ENCODE measurements at regions of chr1 and their contacts with region 1.

Region 1: DNA sequence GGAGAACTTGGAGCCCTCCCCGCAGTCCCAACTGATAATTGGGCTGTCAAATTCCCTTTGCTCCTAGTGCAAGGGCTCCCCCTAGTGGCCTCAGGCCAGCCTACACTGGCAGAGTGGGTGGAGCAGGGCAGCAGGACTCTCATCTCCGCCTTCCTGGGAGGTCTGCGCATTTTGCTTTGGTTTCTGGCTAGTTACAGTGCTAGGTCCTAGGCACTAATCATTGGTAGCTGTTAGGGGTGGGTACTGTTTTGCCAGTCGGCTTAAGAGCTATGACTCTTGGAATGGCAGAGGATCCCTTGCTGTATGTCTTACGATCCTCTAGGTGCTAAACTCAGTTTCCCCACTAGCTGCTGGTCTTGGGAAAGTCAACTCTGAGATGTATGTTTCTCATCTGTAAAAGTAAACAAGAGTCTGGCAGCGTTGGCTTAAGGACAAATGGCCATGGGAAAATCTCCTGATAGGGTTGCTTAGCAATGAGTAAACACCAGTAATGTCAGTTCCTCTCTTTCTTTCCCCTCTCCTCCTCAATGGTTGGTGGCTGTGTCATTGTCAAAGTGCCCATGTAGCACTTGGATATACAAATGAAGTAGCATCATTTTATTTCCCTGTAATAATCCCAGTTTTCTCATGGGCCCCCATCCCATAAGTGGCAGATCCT is 2.1 kb upstream of the FYB2 start:
- DNase-seq: no peak
- ATAC-seq: peak; percentile 82
- H3K4me3 ChIP-seq: no peak overlapping the region
- H3K27ac ChIP-seq: no peak overlapping the region
- H3K4me1 ChIP-seq: no peaks in the 10 kb centered on the region
- H3K27me3 ChIP-seq: peaks cover 0 to 1% of the 10 kb centered on the region in 2 experiments; a peak in 2 of 4 replicates
- CTCF ChIP-seq: peak; percentile 68 to 95 (median 95)
- EP300 ChIP-seq: no peak
- POLR2A ChIP-seq: no peak
- RAD21 ChIP-seq: peak; percentile 76

Region 2: DNA sequence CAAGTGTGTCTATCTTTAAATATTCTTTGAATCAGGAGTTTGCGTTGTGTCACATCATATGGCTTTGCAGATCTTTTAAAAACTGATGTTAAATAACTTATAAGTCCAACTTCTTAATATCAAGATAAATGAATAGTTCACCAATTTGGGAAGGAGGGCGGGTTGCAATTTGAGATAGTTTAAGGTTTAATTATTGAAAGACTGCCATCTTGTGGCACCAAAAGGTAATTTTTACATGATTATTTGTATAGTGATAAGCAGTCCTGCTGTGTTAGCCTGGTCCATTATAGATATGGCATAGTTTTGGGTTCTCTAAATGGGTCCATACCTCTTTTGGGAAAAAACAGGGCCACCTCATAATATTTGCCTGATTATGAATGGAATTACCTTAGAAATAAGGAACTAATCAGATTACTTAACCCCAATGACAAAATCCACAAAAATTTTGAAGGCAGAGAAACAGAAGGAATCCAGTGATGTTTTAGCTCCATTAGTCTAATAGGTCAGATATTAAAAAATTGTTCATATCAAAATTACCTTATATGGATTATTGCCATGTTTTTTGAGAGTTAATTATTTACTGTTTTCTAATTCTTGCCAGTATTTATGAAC is 111.9 kb before region 1 on chr1:
- CTCF ChIA-PET with region 1: interaction called, 18 read pairs
- POLR2A ChIA-PET with region 1: no interaction called
- RAD21 ChIA-PET with region 1: interaction called, 5 read pairs
- SMC1A ChIA-PET with region 1: interaction called, 3 read pairs
- in situ Hi-C with region 1: no loop called
- intact Hi-C with region 1: loop called (anchors 5 kb)
- DNase-seq: no peak
- ATAC-seq: peak; percentile 85
- H3K4me3 ChIP-seq: no peak overlapping the region
- H3K27ac ChIP-seq: no peak overlapping the region
- H3K4me1 ChIP-seq: no peaks in the 10 kb centered on the region
- H3K27me3 ChIP-seq: no peaks in the 10 kb centered on the region
- CTCF ChIP-seq: peak; percentile 33 to 57 (median 44); a peak in 4 of 6 replicates
- EP300 ChIP-seq: no peak
- POLR2A ChIP-seq: no peak
- RAD21 ChIP-seq: peak; percentile 45

Region 3: DNA sequence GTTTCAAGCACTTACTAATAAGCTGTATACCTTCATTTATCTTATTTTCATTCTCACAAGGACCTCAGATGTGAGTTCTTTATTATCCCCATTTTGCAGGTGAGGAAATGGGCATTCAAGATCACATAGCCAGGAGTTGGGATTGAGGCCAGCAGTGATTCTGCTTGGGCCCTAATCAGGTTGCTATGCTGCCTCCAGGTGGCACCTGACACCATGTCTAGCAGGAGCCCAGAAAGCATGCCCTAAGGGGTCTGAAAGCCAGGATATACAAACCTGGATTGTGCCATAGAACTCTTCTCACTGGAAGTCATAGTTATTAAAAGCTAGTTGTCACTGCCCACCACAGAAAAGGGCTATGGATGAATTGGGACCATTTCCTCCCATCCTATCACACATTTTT is 63.1 kb before region 1 on chr1:
- CTCF ChIA-PET with region 1: interaction called, 10 read pairs
- POLR2A ChIA-PET with region 1: no interaction called
- RAD21 ChIA-PET with region 1: interaction called, 3 read pairs
- SMC1A ChIA-PET with region 1: interaction called, 3 read pairs
- in situ Hi-C with region 1: no loop called
- intact Hi-C with region 1: loop called (anchors 2 kb)
- DNase-seq: no peak
- ATAC-seq: peak; percentile 78
- H3K4me3 ChIP-seq: no peak overlapping the region
- H3K27ac ChIP-seq: no peak overlapping the region
- H3K4me1 ChIP-seq: no peaks in the 10 kb centered on the region
- H3K27me3 ChIP-seq: no peaks in the 10 kb centered on the region
- CTCF ChIP-seq: peak in 2 of 3 experiments; percentile 14 to 34; a peak in 3 of 6 replicates
- EP300 ChIP-seq: no peak
- POLR2A ChIP-seq: no peak
- RAD21 ChIP-seq: 0 out of 2 replicates have a peak, but pooled peaks have one; percentile 17

Region 4: DNA sequence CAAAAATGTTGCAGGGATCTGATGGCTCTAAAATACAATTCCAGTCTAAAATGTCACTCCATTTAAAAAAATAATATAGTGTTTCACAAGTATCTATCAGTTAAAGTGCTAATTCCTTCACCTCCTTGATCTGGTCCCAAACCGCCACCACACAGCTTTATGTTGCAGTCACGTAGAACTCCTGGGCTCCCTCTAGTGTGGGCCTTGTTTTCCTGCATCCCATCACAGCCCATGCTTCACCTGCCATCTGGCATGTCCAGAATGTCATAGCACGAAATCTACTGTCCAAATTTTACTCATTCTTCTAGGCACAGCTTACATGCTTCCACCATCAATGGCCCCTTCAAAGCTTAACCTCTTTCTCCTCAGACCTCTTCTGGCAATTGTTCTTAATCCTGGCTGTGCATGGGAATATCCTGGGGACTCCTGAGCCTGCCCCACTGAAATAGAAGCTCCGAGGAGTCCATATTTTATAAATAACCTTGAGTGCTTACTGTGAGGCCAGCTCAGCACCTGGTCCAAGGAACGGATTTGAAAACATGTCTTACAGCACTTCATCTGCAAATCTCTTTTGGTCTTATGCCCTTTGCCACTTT is 17.6 kb before region 1 on chr1:
- CTCF ChIA-PET with region 1: interaction called, 15 read pairs
- POLR2A ChIA-PET with region 1: no interaction called
- RAD21 ChIA-PET with region 1: interaction called, 4 read pairs
- SMC1A ChIA-PET with region 1: interaction called, 6 read pairs
- in situ Hi-C with region 1: no loop called
- intact Hi-C with region 1: no loop called
- DNase-seq: no peak
- ATAC-seq: peak; percentile 94
- H3K4me3 ChIP-seq: no peak overlapping the region
- H3K27ac ChIP-seq: no peak overlapping the region
- H3K4me1 ChIP-seq: no peaks in the 10 kb centered on the region
- H3K27me3 ChIP-seq: no peaks in the 10 kb centered on the region
- CTCF ChIP-seq: peak; percentile 63 to 74 (median 73)
- EP300 ChIP-seq: no peak
- POLR2A ChIP-seq: no peak
- RAD21 ChIP-seq: peak; percentile 30

Region 5: GRCh38 chr1:56948403-56949023 is 127.2 kb after region 1 on chr1:
- CTCF ChIA-PET with region 1: no interaction called
- POLR2A ChIA-PET with region 1: no interaction called
- RAD21 ChIA-PET with region 1: no interaction called
- SMC1A ChIA-PET with region 1: no interaction called
- in situ Hi-C with region 1: no loop called
- intact Hi-C with region 1: no loop called
- DNase-seq: no peak
- ATAC-seq: 0 out of 3 replicates have a peak, but pooled peaks have one; percentile 26
- H3K4me3 ChIP-seq: no peak overlapping the region
- H3K27ac ChIP-seq: no peak overlapping the region
- H3K4me1 ChIP-seq: no peaks in the 10 kb centered on the region
- H3K27me3 ChIP-seq: no peaks in the 10 kb centered on the region; a peak in 1 of 4 replicates
- CTCF ChIP-seq: no peak
- EP300 ChIP-seq: no peak
- POLR2A ChIP-seq: no peak
- RAD21 ChIP-seq: no peak

Region 6: GRCh38 chr1:58047265-58047858 is 1226.1 kb after region 1 on chr1:
- CTCF ChIA-PET with region 1: no interaction called
- POLR2A ChIA-PET with region 1: no interaction called
- RAD21 ChIA-PET with region 1: interaction called, 3 read pairs
- SMC1A ChIA-PET with region 1: no interaction called
- in situ Hi-C with region 1: loop called (anchors 5 kb)
- intact Hi-C with region 1: no loop called
- DNase-seq: no peak
- ATAC-seq: peak; percentile 88
- H3K4me3 ChIP-seq: no peak overlapping the region
- H3K27ac ChIP-seq: no peak overlapping the region
- H3K4me1 ChIP-seq: no peaks in the 10 kb centered on the region
- H3K27me3 ChIP-seq: no peaks in the 10 kb centered on the region; a peak in 1 of 4 replicates
- CTCF ChIP-seq: peak; percentile 60 to 80 (median 70)
- EP300 ChIP-seq: no peak
- POLR2A ChIP-seq: no peak
- RAD21 ChIP-seq: peak; percentile 62